Naive thymus-derived CD4-positive, alpha-beta T cell (primary cell): ENCODE measurements at regions of chr11 and their contacts with region 1.

Region 1: DNA sequence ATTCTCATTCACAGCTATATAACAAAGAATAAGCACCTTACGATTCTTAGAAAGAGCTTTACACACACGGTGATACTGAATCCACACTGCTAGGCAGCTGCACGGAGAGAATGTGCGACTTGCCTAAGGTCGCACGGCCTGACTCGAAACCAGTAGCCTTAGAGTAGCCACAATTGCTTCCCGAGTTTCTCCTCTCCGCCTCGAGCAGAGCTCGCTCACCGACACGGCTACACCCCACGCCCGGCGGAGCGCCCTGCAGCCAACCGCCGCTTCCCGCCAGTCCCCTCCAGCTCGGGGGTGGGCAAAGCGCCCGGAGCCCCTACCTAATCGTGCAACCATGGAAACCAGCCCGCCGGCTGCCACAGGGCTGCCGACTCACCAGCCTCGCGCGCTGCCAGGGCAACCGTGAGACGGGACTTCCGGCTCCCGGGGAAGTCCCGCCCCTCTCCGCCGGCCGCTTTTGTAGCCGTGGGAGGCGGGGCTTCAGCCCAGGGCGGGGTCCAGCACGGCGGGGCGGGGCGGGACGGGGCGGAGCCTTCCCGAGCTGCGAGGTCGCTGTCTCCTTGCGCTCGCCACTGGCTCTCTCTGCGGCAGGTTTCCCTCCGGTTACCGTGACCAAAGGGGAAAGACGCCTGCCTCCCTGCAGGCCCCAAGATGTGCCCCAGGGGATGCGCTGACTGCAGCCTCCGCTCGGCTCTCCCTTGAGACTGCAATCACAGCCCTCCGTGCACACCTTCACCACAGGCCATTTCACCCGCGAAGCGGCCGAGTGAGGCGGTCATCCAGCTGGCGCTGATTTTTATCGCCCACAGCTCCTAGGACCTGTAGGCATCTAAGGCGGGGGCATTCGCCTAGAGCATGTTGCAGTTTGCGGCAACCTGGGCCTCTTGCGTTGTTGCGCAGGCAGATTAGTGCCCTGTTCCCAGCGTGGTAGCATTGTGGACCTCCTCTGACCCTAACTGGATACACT is 1.1 kb downstream of the BSCL2 start:
- DNase-seq: peak; percentile 86 to 96 (median 90)
- ATAC-seq: peak; percentile 79
- H3K4me3 ChIP-seq: peak overlapping the region; percentile 74
- H3K4me3 Mint-ChIP-seq: peak overlapping the region; percentile 83 to 97 (median 90)
- H3K27ac ChIP-seq: peak overlapping the region; percentile 73
- H3K27ac Mint-ChIP-seq: peak overlapping the region; percentile 69 to 92 (median 87)
- H3K4me1 ChIP-seq: peaks cover 41 to 46% of the 10 kb centered on the region in 2 donors
- H3K4me1 Mint-ChIP-seq: peaks cover 17 to 49% (median 44%) of the 10 kb centered on the region in 7 donors
- H3K27me3 ChIP-seq: no peaks in the 10 kb centered on the region
- H3K27me3 Mint-ChIP-seq: no peaks in the 10 kb centered on the region

Region 2: GRCh38 chr11:62573592-62574362 is 132.4 kb before region 1 on chr11 and contains the start of gene EEF1G:
- CTCF ChIA-PET with region 1: no interaction called
- POLR2A ChIA-PET with region 1: interaction called, 8 read pairs
- intact Hi-C with region 1: loop called (anchors 1 kb)
- DNase-seq: peak; percentile 88 to 100 (median 99)
- ATAC-seq: peak; percentile 96
- H3K4me3 ChIP-seq: peak within 1 kb of the TSS; percentile 82
- H3K4me3 Mint-ChIP-seq: peak within 1 kb of the TSS; percentile 94 to 100 (median 97)
- H3K27ac ChIP-seq: peak within 1 kb of the TSS; percentile 88
- H3K27ac Mint-ChIP-seq: peak within 1 kb of the TSS; percentile 81 to 98 (median 95)
- H3K4me1 ChIP-seq: peaks cover 8 to 11% of the 10 kb centered on the region in 2 donors
- H3K4me1 Mint-ChIP-seq: peaks cover 39 to 61% (median 45%) of the 10 kb centered on the region in 7 donors
- H3K27me3 ChIP-seq: no peaks in the 10 kb centered on the region
- H3K27me3 Mint-ChIP-seq: no peaks in the 10 kb centered on the region
- total RNA-seq, gene EEF1G: 1,186 to 2,550 (median 2,338) TPM

Region 3: DNA sequence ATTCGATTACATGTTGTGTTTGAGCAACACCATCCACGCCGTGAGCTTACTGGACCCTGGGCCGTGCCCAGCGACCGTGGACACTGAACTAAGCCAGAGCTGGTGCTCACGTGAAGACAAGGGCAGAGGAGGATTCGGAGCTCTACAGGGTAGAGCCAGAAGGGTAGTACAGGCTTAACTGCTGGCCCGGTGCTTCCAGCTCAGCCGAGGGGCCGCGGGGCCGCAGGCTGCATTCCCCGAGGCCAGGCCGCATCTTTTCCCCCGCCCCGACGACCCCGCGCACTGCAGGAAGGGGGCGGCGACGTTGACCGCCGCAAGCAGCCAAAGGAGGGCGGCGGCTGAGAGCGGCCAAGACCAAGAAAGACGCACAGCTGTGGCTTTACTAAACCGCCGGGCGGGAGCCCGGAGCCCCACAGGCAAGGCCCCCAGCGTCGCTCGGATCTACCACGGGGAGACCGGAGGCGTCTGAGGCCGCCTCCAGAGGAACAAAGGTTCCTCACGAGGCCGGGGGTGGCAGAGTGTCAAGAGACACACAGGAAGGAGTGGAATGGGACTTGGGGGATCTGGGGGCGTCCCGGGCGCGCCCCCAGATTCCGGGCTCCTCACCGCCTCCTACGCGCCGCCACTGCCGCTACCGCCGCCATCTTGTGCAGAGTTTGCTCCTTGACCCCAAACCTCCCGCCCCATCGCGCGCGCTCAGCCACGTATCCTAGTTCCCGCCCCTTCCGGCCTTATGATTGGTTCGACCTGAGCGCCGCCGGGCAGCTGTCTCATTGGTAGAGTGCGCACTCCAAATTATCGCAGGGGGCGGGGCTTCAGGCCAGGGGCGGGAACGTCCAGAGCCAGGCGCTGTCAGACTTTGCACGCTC is 60.0 kb before region 1 on chr11 and contains the start of gene GANAB:
- CTCF ChIA-PET with region 1: interaction called, 3 read pairs
- POLR2A ChIA-PET with region 1: interaction called, 23 read pairs
- intact Hi-C with region 1: loop called (anchors 1 kb)
- DNase-seq: peak; percentile 89 to 99 (median 97)
- ATAC-seq: peak; percentile 99
- H3K4me3 ChIP-seq: peak within 1 kb of the TSS; percentile 84
- H3K4me3 Mint-ChIP-seq: peak within 1 kb of the TSS; percentile 94 to 99 (median 98)
- H3K27ac ChIP-seq: peak within 1 kb of the TSS; percentile 97
- H3K27ac Mint-ChIP-seq: peak within 1 kb of the TSS; percentile 92 to 98 (median 96)
- H3K4me1 ChIP-seq: peaks cover 6 to 25% of the 10 kb centered on the region in 2 donors
- H3K4me1 Mint-ChIP-seq: peaks cover 6 to 44% (median 37%) of the 10 kb centered on the region in 7 donors
- H3K27me3 ChIP-seq: no peaks in the 10 kb centered on the region
- H3K27me3 Mint-ChIP-seq: no peaks in the 10 kb centered on the region
- total RNA-seq, gene GANAB: 203 to 313 (median 286) TPM

Region 4: GRCh38 chr11:62671575-62672389 is 34.4 kb before region 1 on chr11 and contains the starts of genes LBHD1 and UQCC3:
- CTCF ChIA-PET with region 1: no interaction called
- POLR2A ChIA-PET with region 1: interaction called, 81 read pairs
- intact Hi-C with region 1: loop called in 1 of 2 experiments (anchors 1 kb)
- DNase-seq: peak; percentile 49 to 80 (median 73)
- ATAC-seq: peak; percentile 85
- H3K4me3 ChIP-seq: peak within 1 kb of the TSS; percentile 62
- H3K4me3 Mint-ChIP-seq: peak within 1 kb of the TSS; percentile 94 to 100 (median 99)
- H3K27ac ChIP-seq: peak within 1 kb of the TSS; percentile 90
- H3K27ac Mint-ChIP-seq: peak within 1 kb of the TSS; percentile 91 to 97 (median 96)
- H3K4me1 ChIP-seq: peaks cover 12 to 25% of the 10 kb centered on the region in 2 donors
- H3K4me1 Mint-ChIP-seq: peaks cover 12 to 62% (median 51%) of the 10 kb centered on the region in 7 donors
- H3K27me3 ChIP-seq: no peaks in the 10 kb centered on the region
- H3K27me3 Mint-ChIP-seq: no peaks in the 10 kb centered on the region
- total RNA-seq, gene LBHD1: 13.8 to 26.4 (median 20.8) TPM
- total RNA-seq, gene UQCC3: 2.2 to 8.2 (median 5.8) TPM

Region 5: GRCh38 chr11:62753736-62754603 is 47.8 kb after region 1 on chr11 and contains the start of gene ZBTB3:
- CTCF ChIA-PET with region 1: no interaction called
- POLR2A ChIA-PET with region 1: interaction called, 16 read pairs
- intact Hi-C with region 1: loop called (anchors 1 kb)
- DNase-seq: peak; percentile 89 to 99 (median 98)
- ATAC-seq: peak; percentile 96
- H3K4me3 ChIP-seq: peak within 1 kb of the TSS; percentile 94
- H3K4me3 Mint-ChIP-seq: peak within 1 kb of the TSS; percentile 86 to 100 (median 98)
- H3K27ac ChIP-seq: peak within 1 kb of the TSS; percentile 83
- H3K27ac Mint-ChIP-seq: peak within 1 kb of the TSS; percentile 93 to 99 (median 95)
- H3K4me1 ChIP-seq: peaks cover 15 to 16% of the 10 kb centered on the region in 2 donors
- H3K4me1 Mint-ChIP-seq: peaks cover 9 to 41% (median 29%) of the 10 kb centered on the region in 7 donors
- H3K27me3 ChIP-seq: no peaks in the 10 kb centered on the region
- H3K27me3 Mint-ChIP-seq: no peaks in the 10 kb centered on the region
- total RNA-seq, gene ZBTB3: 6.4 to 24.1 (median 19.0) TPM

Region 6: DNA sequence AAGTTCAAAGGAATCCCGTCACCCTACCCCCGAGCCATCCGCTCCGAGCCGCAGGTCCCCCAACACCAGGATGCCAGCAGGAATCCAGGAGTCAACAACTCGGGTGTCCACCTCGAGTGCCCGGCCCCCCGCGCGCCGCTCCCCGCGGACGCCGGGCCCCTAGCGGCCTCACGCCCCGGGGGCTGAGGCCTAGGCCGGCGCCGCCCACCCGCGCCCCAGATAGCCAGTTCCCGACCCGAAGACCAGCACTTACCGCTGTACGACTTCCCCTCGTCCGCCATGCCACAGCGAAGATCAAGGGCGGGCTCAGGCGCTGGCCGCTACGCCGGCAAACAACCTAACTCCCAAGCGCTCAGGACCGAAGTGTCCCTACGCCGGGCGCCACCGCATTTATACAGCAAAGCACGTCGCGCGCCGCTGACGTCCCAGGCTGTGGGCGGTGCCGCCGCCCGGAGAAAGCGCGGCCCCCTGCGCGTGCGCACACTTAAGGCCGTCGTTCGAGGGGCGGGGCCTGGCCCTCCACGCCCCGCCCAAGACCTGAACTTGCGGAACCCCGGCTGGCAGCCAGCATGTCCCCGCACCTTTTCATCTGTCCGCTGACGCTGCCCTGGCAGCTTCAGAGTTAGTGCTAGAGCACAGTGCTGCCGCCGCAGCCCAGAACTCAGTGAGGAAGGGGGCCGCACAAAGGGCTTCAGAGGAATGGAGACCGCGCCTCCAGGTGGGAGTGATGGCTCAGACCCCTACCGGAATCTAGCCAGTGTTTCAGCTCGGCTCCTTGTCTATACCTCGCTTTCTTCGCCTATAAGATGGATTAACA is 99.1 kb after region 1 on chr11 and contains the start of gene NXF1:
- CTCF ChIA-PET with region 1: no interaction called
- POLR2A ChIA-PET with region 1: interaction called, 15 read pairs
- intact Hi-C with region 1: loop called in 1 of 2 experiments (anchors 1 kb)
- DNase-seq: peak; percentile 91 to 99 (median 97)
- ATAC-seq: peak; percentile 92
- H3K4me3 ChIP-seq: peak within 1 kb of the TSS; percentile 87
- H3K4me3 Mint-ChIP-seq: peak within 1 kb of the TSS; percentile 90 to 100 (median 99)
- H3K27ac ChIP-seq: peak within 1 kb of the TSS; percentile 97
- H3K27ac Mint-ChIP-seq: peak within 1 kb of the TSS; percentile 95 to 100 (median 99)
- H3K4me1 ChIP-seq: peaks cover 13 to 18% of the 10 kb centered on the region in 2 donors
- H3K4me1 Mint-ChIP-seq: peaks cover 17 to 55% (median 34%) of the 10 kb centered on the region in 7 donors
- H3K27me3 ChIP-seq: no peaks in the 10 kb centered on the region
- H3K27me3 Mint-ChIP-seq: peaks cover 0 to 2% (median 0%) of the 10 kb centered on the region in 5 donors
- total RNA-seq, gene NXF1: 92.1 to 421 (median 195) TPM

Region 7: GRCh38 chr11:62880803-62881578 is 174.8 kb after region 1 on chr11 and contains the start of gene SLC3A2:
- CTCF ChIA-PET with region 1: no interaction called
- POLR2A ChIA-PET with region 1: interaction called, 21 read pairs
- intact Hi-C with region 1: loop called in 1 of 2 experiments (anchors 1 kb)
- DNase-seq: peak; percentile 80 to 90 (median 87)
- ATAC-seq: peak; percentile 88
- H3K4me3 ChIP-seq: peak within 1 kb of the TSS; percentile 97
- H3K4me3 Mint-ChIP-seq: peak within 1 kb of the TSS; percentile 98 to 100 (median 100)
- H3K27ac ChIP-seq: peak within 1 kb of the TSS; percentile 94
- H3K27ac Mint-ChIP-seq: peak within 1 kb of the TSS; percentile 98 to 100 (median 99)
- H3K4me1 ChIP-seq: peaks cover 34 to 35% of the 10 kb centered on the region in 2 donors
- H3K4me1 Mint-ChIP-seq: peaks cover 34 to 60% (median 53%) of the 10 kb centered on the region in 7 donors
- H3K27me3 ChIP-seq: no peaks in the 10 kb centered on the region
- H3K27me3 Mint-ChIP-seq: peaks cover 0 to 4% (median 0%) of the 10 kb centered on the region in 5 donors
- total RNA-seq, gene SLC3A2: 159 to 239 (median 218) TPM